K562 (cell line): ENCODE measurements at regions of chr15 and their contacts with region 1.

Region 1: DNA sequence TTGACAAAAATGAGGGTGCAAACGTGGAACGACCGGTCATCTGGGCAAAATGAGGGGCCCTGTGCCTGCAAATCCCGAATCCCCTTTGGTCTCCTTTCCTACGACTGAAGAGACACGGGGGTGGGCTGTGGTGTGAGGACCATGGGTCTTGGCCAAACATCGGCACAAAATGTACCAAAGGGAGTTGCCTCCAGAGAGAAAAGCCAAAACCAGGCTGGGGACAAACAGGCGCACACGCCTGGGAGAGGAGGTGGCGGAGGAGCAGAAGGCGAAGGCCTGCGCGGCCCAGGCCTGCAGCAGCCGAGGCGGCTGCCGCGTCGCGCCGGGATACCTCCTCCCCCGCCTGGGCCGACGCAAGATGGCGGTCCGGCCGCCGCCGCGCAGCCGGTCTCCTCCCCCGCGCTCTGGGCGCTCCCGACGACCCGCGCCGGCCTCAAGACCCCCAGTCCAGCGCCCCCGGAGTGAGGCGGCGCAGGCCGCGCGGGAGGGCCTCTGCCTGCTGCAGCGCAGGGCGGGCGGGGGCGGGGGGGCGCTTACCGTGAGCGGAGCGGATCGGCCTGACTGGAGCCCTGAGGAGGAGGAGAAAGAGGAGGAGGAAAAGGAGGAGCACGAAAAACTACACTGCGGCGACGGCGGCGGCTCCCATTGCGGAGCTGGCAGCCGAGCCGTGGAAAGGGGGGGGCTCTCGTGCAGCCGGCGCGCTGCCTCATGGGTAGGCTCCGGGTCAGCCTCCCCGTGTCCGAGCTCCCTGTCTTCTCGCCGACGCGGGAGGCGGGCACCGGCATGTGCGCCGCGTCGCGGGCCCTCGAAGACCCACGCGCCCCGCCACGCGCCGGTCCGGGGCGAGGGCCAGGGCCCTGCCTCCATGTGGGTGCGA is at the start of gene ZNF280D:
- DNase-seq: peak; percentile 87 to 92 (median 88)
- ATAC-seq: peak; percentile 94
- H3K4me3 ChIP-seq: peak within 1 kb of the TSS; percentile 46
- H3K27ac ChIP-seq: peak within 1 kb of the TSS; percentile 90
- H3K4me1 ChIP-seq: peaks cover 16 to 38% of the 10 kb centered on the region in 2 experiments
- H3K27me3 ChIP-seq: no peaks in the 10 kb centered on the region
- CTCF ChIP-seq: no peak
- EP300 ChIP-seq: peak; percentile 5; the same call in 1 of the 2 replicates
- POLR2A ChIP-seq: peak; percentile 66
- RAD21 ChIP-seq: peak in 1 of 2 experiments; percentile 8; a peak in 2 of 4 replicates
- polyA plus RNA-seq, gene ZNF280D: 10.2 to 12.1 TPM

Region 2: DNA sequence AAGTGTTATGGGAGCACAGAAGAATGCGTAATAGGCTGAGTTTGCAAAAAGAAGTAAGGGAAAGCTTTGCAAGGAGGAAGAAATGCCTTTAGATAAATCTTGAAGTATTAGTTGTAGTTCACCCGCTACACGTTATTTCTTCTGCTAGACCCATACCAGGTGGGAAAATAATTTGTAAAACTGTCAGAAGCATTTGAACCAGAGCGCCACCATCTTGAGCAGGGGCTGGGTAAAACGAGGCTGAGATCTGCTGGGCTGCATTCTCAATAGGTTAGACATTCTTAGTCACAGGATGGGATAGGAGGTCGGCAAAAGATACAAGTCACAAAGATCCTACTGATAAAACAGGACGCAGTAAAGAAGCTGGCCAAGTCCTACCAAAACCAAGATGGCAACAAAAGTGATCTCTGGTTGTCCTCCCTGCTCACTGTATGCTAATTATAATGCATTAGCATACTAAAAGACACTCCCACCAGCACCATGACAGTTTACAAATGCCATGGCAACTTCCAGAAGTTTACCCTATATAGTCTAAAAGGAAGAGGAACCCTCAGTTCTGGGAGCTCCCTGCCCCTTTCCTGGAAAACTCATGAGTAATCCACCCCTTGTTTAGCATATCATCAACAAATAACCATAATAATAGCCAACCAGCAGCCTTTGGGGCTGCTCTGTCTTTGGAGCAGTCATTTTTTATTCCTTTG is 50.1 kb after region 1 on chr15:
- CTCF ChIA-PET with region 1: no interaction called
- POLR2A ChIA-PET with region 1: interaction called, 3 read pairs
- in situ Hi-C with region 1: no loop called
- intact Hi-C with region 1: loop called (anchors 2 kb)
- DNase-seq: peak in 1 of 4 experiments; percentile 65
- ATAC-seq: peak; percentile 78
- H3K4me3 ChIP-seq: no peak overlapping the region
- H3K27ac ChIP-seq: peak overlapping the region; percentile 58; the same call in 2 of the 3 replicates
- H3K4me1 ChIP-seq: peaks cover 0 to 22% of the 10 kb centered on the region in 2 experiments; a peak in 4 of 5 replicates
- H3K27me3 ChIP-seq: no peaks in the 10 kb centered on the region
- CTCF ChIP-seq: no peak
- EP300 ChIP-seq: no peak
- POLR2A ChIP-seq: no peak
- RAD21 ChIP-seq: no peak